ENCODE measurements at regions of chr2 and their contacts with region 1.

Region 1: DNA sequence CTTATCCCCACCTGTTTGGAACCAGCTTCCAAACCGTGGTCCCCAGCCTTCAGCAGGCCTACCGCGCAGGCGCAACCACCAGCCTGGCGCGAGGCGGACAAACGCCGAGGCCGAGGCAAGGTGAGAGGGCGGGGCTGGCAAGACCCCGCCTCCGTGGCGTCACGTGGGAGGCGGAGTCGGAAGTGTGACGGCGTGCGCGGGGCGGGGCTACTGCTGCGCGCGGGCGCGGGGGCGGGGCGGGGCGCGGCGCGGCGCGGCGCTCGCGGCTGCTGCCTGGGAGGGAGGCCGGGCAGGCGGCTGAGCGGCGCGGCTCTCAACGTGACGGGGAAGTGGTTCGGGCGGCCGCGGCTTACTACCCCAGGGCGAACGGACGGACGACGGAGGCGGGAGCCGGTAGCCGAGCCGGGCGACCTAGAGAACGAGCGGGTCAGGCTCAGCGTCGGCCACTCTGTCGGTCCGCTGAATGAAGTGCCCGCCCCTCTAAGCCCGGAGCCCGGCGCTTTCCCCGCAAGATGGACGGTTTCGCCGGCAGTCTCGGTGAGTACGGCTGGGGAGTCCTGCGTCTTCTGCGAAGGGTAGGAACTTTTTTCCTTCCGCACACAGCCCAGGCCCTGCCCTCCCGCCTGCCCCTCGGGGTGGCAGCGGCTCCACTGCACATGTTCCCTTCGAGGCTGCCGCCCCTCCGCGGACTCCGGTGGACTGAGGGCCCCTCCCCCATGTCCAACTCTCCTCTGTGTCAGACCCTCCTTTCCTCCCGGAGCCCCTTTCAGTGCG is at the start of gene EML4:
- DNase-seq: peak; percentile 92
- H3K4me3 Mint-ChIP-seq: no peak within 1 kb of the TSS
- H3K27ac Mint-ChIP-seq: peak within 1 kb of the TSS; percentile 63
- H3K4me1 Mint-ChIP-seq: peaks cover 24% of the 10 kb centered on the region
- H3K27me3 Mint-ChIP-seq: peaks cover 7% of the 10 kb centered on the region
- total RNA-seq, gene EML4: 130 to 133 TPM

Region 2: GRCh38 chr2:42117923-42118753 is 51.1 kb before region 1 on chr2:
- CTCF ChIA-PET with region 1: no interaction called
- POLR2A ChIA-PET with region 1: interaction called, 71 read pairs
- DNase-seq: no peak
- H3K4me3 Mint-ChIP-seq: no peak overlapping the region
- H3K27ac Mint-ChIP-seq: peak overlapping the region; percentile 60
- H3K4me1 Mint-ChIP-seq: peaks cover 38% of the 10 kb centered on the region
- H3K27me3 Mint-ChIP-seq: no peaks in the 10 kb centered on the region

Region 3: GRCh38 chr2:42127425-42128424 is 41.6 kb before region 1 on chr2:
- CTCF ChIA-PET with region 1: interaction called, 14 read pairs
- POLR2A ChIA-PET with region 1: interaction called, 71 read pairs
- DNase-seq: peak; percentile 45
- H3K4me3 Mint-ChIP-seq: peak overlapping the region; percentile 48
- H3K27ac Mint-ChIP-seq: peak overlapping the region; percentile 88
- H3K4me1 Mint-ChIP-seq: peaks cover 92% of the 10 kb centered on the region
- H3K27me3 Mint-ChIP-seq: no peaks in the 10 kb centered on the region

Region 4: DNA sequence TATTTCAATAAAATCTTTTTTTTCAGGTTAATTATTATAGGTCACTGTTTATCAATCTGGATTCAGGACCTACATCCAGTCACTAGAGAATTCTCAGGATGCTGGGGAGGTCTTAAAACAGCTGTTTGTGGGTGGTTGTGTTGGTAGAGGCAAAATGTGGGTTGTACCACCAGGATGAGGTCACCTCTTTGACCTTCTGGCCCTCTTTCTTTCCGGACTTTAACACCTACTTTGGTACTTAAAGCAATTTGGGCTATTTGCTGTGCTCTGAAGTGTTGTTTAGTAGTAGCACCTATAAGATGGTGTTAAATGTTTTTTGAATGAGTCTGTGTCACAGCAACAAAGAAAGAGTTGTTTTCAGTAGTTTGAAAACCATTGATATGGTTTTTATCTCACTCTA is 14.5 kb after region 1 on chr2:
- CTCF ChIA-PET with region 1: interaction called, 5 read pairs
- POLR2A ChIA-PET with region 1: interaction called, 22 read pairs
- DNase-seq: no peak
- H3K4me3 Mint-ChIP-seq: no peak overlapping the region
- H3K27ac Mint-ChIP-seq: no peak overlapping the region
- H3K4me1 Mint-ChIP-seq: peaks cover 54% of the 10 kb centered on the region
- H3K27me3 Mint-ChIP-seq: no peaks in the 10 kb centered on the region

Region 5: GRCh38 chr2:42314892-42315467 is 145.7 kb after region 1 on chr2:
- CTCF ChIA-PET with region 1: no interaction called
- POLR2A ChIA-PET with region 1: no interaction called
- DNase-seq: no peak
- H3K4me3 Mint-ChIP-seq: no peak overlapping the region
- H3K27ac Mint-ChIP-seq: peak overlapping the region; percentile 26
- H3K4me1 Mint-ChIP-seq: peaks cover 15% of the 10 kb centered on the region
- H3K27me3 Mint-ChIP-seq: no peaks in the 10 kb centered on the region